Motor neuron (in vitro differentiated cells): ENCODE measurements at regions of chr2 and their contacts with region 1.

Region 1: GRCh38 chr2:191811807-191812602 is 34.9 kb downstream of the CAVIN2 start:
- ATAC-seq: peak; percentile 83 to 95 (median 90)
- H3K4me3 ChIP-seq: no peak overlapping the region
- H3K27ac ChIP-seq: no peak overlapping the region
- H3K4me1 ChIP-seq: peaks cover 0 to 13% of the 10 kb centered on the region in 2 donors

Region 2: DNA sequence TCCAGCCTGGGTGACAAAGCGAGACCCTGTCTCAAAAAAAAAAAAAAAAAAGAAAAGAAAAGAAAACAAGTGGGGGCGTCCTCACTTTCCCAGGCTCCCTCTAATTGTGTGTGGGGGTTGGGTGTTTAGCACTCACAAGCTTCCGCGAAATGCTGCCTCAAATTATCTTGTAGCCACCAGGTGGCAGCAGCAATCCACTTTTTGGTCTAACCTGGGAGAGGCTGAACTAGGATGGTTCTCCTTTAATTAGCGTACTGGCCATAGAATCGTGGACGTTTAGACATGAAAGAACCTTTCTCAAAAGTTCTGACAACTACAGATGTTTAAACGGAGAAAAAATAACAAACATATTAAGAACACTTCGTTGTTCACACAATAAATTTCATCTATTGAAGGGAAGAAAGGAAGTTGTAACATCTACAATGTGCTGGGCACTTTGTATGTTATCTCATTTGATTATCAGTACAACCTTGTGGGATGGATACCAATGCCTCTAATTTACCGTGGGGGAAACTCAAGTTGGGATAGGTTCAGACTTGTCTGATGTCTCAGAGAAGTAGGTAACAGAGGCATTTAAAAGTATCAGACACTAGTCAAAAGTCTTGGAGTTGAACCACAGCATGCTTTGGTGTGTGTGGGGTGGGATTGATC is 256.8 kb before region 1 on chr2:
- in situ Hi-C with region 1: loop called in 1 of 9 experiments (anchors 25 kb)
- ATAC-seq: peak; percentile 83 to 99 (median 90)
- H3K4me3 ChIP-seq: no peak overlapping the region
- H3K27ac ChIP-seq: no peak overlapping the region
- H3K4me1 ChIP-seq: no peaks in the 10 kb centered on the region

Region 3: GRCh38 chr2:192060161-192060560 is 248.2 kb after region 1 on chr2:
- in situ Hi-C with region 1: no loop called
- ATAC-seq: peak in 4 of 8 experiments; percentile 12 to 39 (median 27)
- H3K4me3 ChIP-seq: no peak overlapping the region
- H3K27ac ChIP-seq: no peak overlapping the region
- H3K4me1 ChIP-seq: peaks cover 0 to 11% of the 10 kb centered on the region in 2 donors

Region 4: DNA sequence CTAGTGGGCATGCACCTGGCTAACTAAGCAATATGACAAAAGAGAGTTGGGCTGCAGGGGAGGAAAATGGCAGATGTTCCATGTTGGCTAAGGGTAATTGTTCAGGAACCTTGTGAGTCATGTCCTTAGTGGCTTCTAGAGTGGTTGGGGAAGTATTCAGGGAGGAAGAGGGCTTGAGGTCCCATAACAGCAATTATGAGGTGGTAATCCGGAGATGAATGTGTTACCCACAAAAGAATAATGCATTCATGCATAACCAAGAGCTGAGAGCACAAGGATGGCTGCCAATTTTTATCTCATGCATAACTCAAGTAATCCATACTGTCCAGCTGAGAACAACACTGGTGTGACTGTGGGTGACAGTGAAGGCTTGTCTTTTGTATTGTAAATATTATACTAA is 339.8 kb after region 1 on chr2:
- in situ Hi-C with region 1: loop called in 5 of 9 experiments (anchors 10 to 25 kb)
- ATAC-seq: peak in 3 of 8 experiments; percentile 59 to 90 (median 79)
- H3K4me3 ChIP-seq: no peak overlapping the region
- H3K27ac ChIP-seq: no peak overlapping the region
- H3K4me1 ChIP-seq: peaks cover 0 to 18% of the 10 kb centered on the region in 2 donors

Region 5: DNA sequence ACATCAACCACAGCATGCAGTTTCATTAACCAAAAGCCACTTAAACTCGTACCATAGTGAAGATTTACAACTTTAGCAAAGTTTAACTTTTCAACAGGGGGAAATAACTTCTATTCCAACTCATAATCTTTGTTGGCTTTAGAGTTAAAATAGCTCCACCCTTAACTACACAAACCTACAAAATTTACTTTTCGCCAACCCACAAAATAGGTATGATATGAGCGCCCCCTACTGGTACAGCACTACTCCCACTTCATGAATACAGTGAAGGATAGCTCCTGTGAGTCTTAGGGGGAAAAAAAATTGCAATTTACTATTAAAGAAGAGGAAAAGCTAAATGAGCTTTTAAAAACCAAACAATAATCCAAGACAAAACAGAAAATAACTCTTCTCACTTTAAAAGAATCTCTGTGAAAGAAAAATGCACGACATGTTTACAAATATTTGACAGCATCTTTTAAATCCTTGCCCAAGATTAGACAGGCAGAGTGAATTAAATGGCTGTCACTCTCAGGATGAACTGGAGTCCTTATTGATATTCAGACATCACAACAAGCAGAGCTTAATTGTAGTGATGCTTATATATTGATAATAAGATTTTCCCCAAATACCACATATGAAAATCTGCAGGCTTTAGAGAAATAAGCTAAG is 350.5 kb after region 1 on chr2:
- in situ Hi-C with region 1: loop called in 6 of 9 experiments (anchors 5 to 25 kb)
- ATAC-seq: peak; percentile 39 to 86 (median 60)
- H3K4me3 ChIP-seq: no peak overlapping the region
- H3K27ac ChIP-seq: no peak overlapping the region
- H3K4me1 ChIP-seq: peaks cover 0 to 6% of the 10 kb centered on the region in 2 donors

Region 6: GRCh38 chr2:192184349-192184748 is 372.3 kb after region 1 on chr2:
- in situ Hi-C with region 1: loop called in 1 of 9 experiments (anchors 10 kb)
- ATAC-seq: no peak
- H3K4me3 ChIP-seq: no peak overlapping the region
- H3K27ac ChIP-seq: no peak overlapping the region
- H3K4me1 ChIP-seq: no peaks in the 10 kb centered on the region

Region 7: GRCh38 chr2:192286093-192286701 is 474.2 kb after region 1 on chr2:
- in situ Hi-C with region 1: loop called in 1 of 9 experiments (anchors 25 kb)
- ATAC-seq: peak in 4 of 8 experiments; percentile 44 to 77 (median 62)
- H3K4me3 ChIP-seq: no peak overlapping the region
- H3K27ac ChIP-seq: no peak overlapping the region
- H3K4me1 ChIP-seq: peaks cover 3 to 21% of the 10 kb centered on the region in 2 donors